B cell (primary cell): ENCODE measurements at regions of chr21 and their contacts with region 1.

Region 1: DNA sequence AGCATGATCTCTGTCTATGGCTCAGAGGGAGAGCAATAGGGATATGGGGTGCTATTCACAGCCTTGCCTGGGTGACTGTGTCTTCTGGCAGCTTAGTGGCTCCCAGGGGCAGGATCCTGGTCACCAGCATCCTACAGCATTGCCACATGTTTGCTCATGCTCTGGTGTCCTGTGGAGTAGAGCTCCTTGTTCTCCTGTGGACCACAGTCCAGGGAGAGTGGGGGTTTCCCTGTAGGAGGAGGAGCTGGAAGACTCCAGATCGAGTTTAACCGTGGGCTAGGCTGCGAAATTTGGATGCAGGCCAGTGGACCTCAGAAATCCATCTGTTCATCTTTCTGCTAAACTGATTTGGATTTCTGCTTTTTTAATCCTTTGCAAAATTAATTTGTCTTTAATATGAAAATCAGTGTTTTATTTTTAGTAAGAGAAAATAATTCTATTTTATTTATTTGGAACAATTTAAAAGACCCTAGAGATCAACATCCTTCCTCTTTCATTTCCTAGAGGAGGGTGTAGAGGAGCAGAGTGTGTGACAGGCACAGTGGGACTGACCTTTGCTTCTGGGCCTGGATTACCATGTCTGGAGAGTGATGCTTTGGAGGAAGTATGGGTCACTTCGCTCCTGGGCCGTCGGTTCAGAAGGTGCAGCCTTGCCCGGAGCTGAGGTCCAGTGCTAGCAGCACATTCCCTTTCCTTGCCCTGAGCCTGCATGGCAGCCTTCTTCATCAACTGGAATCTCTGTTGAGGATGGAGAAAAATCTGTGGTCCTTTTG is 17.4 kb downstream of the ADARB1 start:
- DNase-seq: no peak
- ATAC-seq: no peak
- H3K4me3 ChIP-seq: peak overlapping the region in 1 of 5 experiments; percentile 9
- H3K4me3 Mint-ChIP-seq: peak overlapping the region; percentile 52
- H3K27ac ChIP-seq: no peak overlapping the region
- H3K27ac Mint-ChIP-seq: peak overlapping the region; percentile 39
- H3K4me1 ChIP-seq: peaks cover 65 to 71% of the 10 kb centered on the region in 2 donors
- H3K4me1 Mint-ChIP-seq: peaks cover 82% of the 10 kb centered on the region
- H3K27me3 ChIP-seq: no peaks in the 10 kb centered on the region
- H3K27me3 Mint-ChIP-seq: no peaks in the 10 kb centered on the region
- CTCF ChIP-seq: no peak

Region 2: DNA sequence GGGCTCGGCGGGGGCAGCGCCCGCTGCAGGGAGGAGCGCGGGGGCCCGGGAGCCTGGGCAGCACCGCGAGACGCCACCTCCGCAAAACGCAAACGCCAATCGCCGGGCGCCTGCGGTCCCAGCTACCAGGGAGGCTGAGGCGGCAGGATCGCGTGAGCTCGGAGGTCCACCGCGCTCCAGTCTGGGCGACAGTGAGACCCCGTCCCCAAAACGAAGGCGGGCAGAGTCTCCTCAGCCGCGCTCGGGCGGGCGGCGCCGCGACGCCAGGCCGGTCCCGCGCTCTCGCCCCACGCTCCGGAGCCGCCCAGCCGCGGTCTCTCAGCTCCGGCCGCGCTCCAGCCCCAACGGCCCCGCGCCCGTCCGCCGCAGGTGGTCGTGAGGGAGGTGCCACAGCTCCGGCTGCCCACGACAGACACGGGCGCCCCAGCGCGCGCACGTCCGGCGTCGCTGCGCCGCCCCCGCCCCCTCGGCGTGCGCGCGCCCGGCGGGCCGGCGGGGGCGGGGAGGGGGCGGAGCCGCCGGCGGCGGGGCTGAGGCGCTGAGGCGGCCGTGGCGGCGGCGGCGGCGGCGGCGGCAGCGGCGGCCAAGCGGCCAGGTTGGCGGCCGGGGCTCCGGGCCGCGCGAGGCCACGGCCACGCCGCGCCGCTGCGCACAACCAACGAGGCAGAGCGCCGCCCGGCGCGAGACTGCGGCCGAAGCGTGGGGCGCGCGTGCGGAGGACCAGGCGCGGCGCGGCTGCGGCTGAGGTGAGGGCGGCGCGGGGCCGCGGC is 17.5 kb before region 1 on chr21 and contains the start of gene ADARB1:
- CTCF ChIA-PET with region 1: no interaction called
- POLR2A ChIA-PET with region 1: no interaction called
- intact Hi-C with region 1: loop called (anchors 2 kb)
- DNase-seq: peak; percentile 84
- ATAC-seq: peak; percentile 87
- H3K4me3 ChIP-seq: peak within 1 kb of the TSS; percentile 69 to 86 (median 75)
- H3K4me3 Mint-ChIP-seq: peak within 1 kb of the TSS; percentile 90
- H3K27ac ChIP-seq: peak within 1 kb of the TSS in 1 of 2 donors; percentile 51
- H3K27ac Mint-ChIP-seq: peak within 1 kb of the TSS; percentile 84
- H3K4me1 ChIP-seq: peaks cover 37 to 44% of the 10 kb centered on the region in 2 donors
- H3K4me1 Mint-ChIP-seq: peaks cover 38% of the 10 kb centered on the region
- H3K27me3 ChIP-seq: no peaks in the 10 kb centered on the region
- H3K27me3 Mint-ChIP-seq: no peaks in the 10 kb centered on the region
- CTCF ChIP-seq: no peak
- total RNA-seq, gene ADARB1: 17.1 and 23.2 TPM in 2 replicates

Region 3: GRCh38 chr21:45104560-45104959 is 12.8 kb after region 1 on chr21:
- CTCF ChIA-PET with region 1: interaction called, 8 read pairs
- POLR2A ChIA-PET with region 1: no interaction called
- intact Hi-C with region 1: loop called (anchors 2 kb)
- DNase-seq: peak; percentile 68
- ATAC-seq: peak; percentile 57
- H3K4me3 ChIP-seq: peak overlapping the region in 2 of 5 experiments; percentile 20
- H3K4me3 Mint-ChIP-seq: peak overlapping the region; percentile 72
- H3K27ac ChIP-seq: peak overlapping the region; percentile 67 to 81
- H3K27ac Mint-ChIP-seq: peak overlapping the region; percentile 28
- H3K4me1 ChIP-seq: peaks cover 79 to 80% of the 10 kb centered on the region in 2 donors
- H3K4me1 Mint-ChIP-seq: peaks cover 82% of the 10 kb centered on the region
- H3K27me3 ChIP-seq: no peaks in the 10 kb centered on the region
- H3K27me3 Mint-ChIP-seq: no peaks in the 10 kb centered on the region
- CTCF ChIP-seq: no peak